Left ventricle myocardium superior (tissue), 1 donor: ENCODE measurements at regions of chr16 and their contacts with region 1.

Region 1: DNA sequence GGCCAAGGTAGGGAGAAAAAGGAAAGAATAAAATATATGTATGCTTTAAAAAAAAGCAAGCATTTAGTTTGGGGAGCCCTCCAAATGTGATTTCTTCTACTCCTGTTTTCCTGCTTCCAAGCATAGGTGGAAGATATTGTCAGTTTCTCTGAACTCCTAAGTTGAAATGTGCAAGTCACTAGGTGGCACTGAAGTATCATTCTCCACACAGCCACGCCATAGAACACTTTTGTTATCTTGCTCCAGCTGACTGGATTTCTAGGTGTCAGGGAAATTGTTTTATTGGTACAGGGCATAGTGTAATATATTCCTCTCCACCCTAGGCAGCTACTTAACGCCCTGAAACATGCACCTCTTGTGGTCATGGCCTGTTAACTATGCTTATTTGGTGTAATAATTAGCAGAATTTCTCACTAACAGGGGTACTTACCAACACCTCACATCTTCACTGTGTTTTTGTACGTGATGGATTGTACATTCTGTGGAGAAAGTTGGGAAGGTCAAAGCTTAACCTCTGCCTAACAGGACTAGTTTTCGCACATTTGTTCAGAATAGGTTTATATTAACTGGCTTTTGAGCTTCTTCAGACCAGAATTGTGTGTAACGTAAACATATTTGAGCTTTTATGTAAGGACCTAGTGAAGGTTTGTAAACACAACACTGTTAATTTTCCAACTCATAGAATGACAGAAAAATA is 69.3 kb downstream of the FTO start:
- DNase-seq: no peak
- ATAC-seq: peak; percentile 93

Region 2: GRCh38 chr16:54817446-54817845 is 1044.1 kb after region 1 on chr16:
- intact Hi-C with region 1: loop called (anchors 5 kb)
- DNase-seq: no peak
- ATAC-seq: peak; percentile 62